Calu3 (cell line): ENCODE measurements at regions of chr21 and their contacts with region 1.

Region 1: GRCh38 chr21:34582506-34583150 is 32.3 kb downstream of the RCAN1 start:
- DNase-seq: peak; percentile 34
- H3K4me3 Mint-ChIP-seq: no peak overlapping the region
- H3K27ac Mint-ChIP-seq: peak overlapping the region; percentile 21
- H3K4me1 Mint-ChIP-seq: peaks cover 9% of the 10 kb centered on the region
- H3K27me3 Mint-ChIP-seq: no peaks in the 10 kb centered on the region
- CTCF ChIP-seq: no peak

Region 2: GRCh38 chr21:34510148-34511142 is 72.2 kb before region 1 on chr21:
- CTCF ChIA-PET with region 1: interaction called, 33 read pairs
- intact Hi-C with region 1: loop called (anchors 1 kb)
- DNase-seq: peak; percentile 81
- H3K4me3 Mint-ChIP-seq: no peak overlapping the region
- H3K27ac Mint-ChIP-seq: no peak overlapping the region
- H3K4me1 Mint-ChIP-seq: peaks cover 7% of the 10 kb centered on the region
- H3K27me3 Mint-ChIP-seq: peaks cover 12% of the 10 kb centered on the region
- CTCF ChIP-seq: peak; percentile 49

Region 3: GRCh38 chr21:34526618-34527290 is 55.9 kb before region 1 on chr21:
- CTCF ChIA-PET with region 1: interaction called, 6 read pairs
- intact Hi-C with region 1: loop called (anchors 5 kb)
- DNase-seq: peak; percentile 71
- H3K4me3 Mint-ChIP-seq: peak overlapping the region; percentile 74
- H3K27ac Mint-ChIP-seq: peak overlapping the region; percentile 78
- H3K4me1 Mint-ChIP-seq: peaks cover 20% of the 10 kb centered on the region
- H3K27me3 Mint-ChIP-seq: no peaks in the 10 kb centered on the region
- CTCF ChIP-seq: no peak

Region 4: DNA sequence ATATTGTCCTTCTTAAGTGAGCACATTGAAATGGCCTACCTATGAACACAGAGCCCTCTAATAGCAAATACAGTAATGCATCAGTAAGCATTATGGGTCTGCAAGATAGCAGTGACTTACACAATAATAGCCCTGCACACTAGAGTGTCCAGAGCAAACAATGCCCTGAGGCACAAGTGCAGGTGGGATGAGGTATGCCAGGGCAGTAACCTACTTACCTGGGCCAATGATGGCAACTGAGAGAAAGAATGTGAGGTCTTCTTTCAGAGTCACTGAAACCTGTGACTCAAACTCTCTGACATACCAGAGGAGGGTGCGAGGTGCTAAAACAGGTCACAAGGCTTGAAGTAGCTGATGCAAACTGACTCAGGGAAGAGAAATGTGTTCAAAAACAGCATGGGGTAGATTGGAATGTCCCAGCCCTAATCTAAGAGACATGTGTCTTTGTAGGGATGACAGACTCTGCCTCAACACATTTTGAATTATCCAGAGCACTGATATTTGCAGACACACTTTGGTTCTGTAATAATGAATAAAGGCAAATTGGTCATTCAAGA is 635.0 kb after region 1 on chr21:
- CTCF ChIA-PET with region 1: no interaction called
- intact Hi-C with region 1: no loop called
- DNase-seq: peak; percentile 79
- H3K4me3 Mint-ChIP-seq: no peak overlapping the region
- H3K27ac Mint-ChIP-seq: peak overlapping the region; percentile 95
- H3K4me1 Mint-ChIP-seq: peaks cover 46% of the 10 kb centered on the region
- H3K27me3 Mint-ChIP-seq: no peaks in the 10 kb centered on the region
- CTCF ChIP-seq: no peak